AG04450 (cell line): ENCODE measurements at regions of chr5 and their contacts with region 1.

Region 1: DNA sequence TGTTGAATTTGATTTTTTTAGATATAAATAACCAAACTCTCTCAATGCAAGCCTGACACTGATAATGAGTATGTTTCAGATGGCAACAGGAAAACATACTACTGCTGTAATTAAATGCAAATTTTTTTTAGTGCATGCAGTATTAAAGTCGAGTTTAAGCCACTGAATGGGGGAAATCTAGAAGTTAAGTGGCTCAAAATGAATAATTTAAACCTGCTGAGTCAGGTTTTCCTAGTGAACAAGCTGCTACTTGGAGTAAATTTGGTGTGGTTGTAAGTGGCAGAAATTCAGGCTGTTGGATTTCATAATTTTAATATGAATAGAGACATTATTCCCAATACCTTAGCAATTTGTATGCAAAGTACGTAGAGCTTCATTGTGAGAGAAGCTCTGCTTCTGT is 121.8 kb downstream of the SLF1 start:
- DNase-seq: no peak
- H3K4me3 ChIP-seq: no peak overlapping the region
- H3K27ac ChIP-seq: no peak overlapping the region
- H3K27me3 ChIP-seq: no peaks in the 10 kb centered on the region
- CTCF ChIP-seq: no peak

Region 2: GRCh38 chr5:94524841-94525697 is 215.2 kb before region 1 on chr5:
- CTCF ChIA-PET with region 1: interaction called, 53 read pairs
- POLR2A ChIA-PET with region 1: no interaction called
- DNase-seq: no peak
- H3K4me3 ChIP-seq: no peak overlapping the region
- H3K27ac ChIP-seq: no peak overlapping the region
- H3K27me3 ChIP-seq: no peaks in the 10 kb centered on the region
- CTCF ChIP-seq: peak; percentile 49

Region 3: GRCh38 chr5:94613583-94613982 is 126.7 kb before region 1 on chr5:
- CTCF ChIA-PET with region 1: interaction called, 12 read pairs
- POLR2A ChIA-PET with region 1: no interaction called
- DNase-seq: no peak
- H3K4me3 ChIP-seq: no peak overlapping the region
- H3K27ac ChIP-seq: no peak overlapping the region
- H3K27me3 ChIP-seq: no peaks in the 10 kb centered on the region
- CTCF ChIP-seq: peak; percentile 27; the same call in 1 of the 2 replicates

Region 4: DNA sequence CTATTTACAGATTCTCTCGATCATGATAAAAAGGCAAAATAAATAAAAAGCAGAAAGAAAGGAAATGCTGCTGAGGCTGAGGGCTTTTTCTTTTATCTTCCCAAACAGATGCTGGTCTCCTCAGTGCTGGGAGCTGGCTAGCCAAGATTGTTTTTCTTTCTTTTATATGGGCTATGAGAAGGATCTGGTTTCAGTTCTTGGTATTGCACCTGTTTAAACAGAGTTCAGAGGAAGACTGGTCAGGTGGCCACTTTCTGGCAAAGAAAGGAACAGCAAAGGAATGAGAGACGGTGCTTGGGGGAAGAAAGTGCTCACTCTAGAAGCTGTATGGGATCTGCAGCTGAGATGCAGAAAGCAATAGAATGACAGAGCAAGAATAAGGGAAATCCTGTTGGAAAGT is 32.9 kb before region 1 on chr5:
- CTCF ChIA-PET with region 1: interaction called, 11 read pairs
- POLR2A ChIA-PET with region 1: no interaction called
- DNase-seq: no peak
- H3K4me3 ChIP-seq: no peak overlapping the region
- H3K27ac ChIP-seq: no peak overlapping the region
- H3K27me3 ChIP-seq: no peaks in the 10 kb centered on the region
- CTCF ChIP-seq: no peak

Region 5: GRCh38 chr5:94857111-94857510 is 116.8 kb after region 1 on chr5:
- CTCF ChIA-PET with region 1: no interaction called
- POLR2A ChIA-PET with region 1: no interaction called
- DNase-seq: no peak
- H3K4me3 ChIP-seq: no peak overlapping the region
- H3K27ac ChIP-seq: no peak overlapping the region
- H3K27me3 ChIP-seq: no peaks in the 10 kb centered on the region
- CTCF ChIP-seq: no peak